ENCODE measurements at regions of chr5 and their contacts with region 1.

Region 1: DNA sequence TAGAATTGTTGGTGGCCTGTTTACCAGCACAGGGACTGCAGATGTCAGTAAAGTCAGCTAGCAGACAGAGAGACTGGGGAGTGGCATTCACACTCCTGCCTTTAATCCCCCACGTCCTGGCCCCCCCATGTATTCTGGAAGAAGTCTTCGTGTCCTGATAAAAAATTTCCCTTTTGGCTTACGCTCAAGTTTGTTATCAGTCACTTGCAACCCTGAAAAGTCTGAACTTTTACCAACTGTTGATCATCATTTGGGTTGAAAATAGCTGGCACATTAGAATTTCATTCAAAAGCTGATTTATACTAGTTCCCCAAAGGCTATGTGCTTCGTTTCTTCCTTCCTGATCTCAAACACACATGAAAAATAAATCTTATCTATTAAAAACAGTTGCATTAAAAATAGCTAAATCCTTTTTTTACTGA is 5.8 kb upstream of the CRHBP start:
- DNase-seq: no peak
- H3K4me3 Mint-ChIP-seq: no peak overlapping the region
- H3K27ac Mint-ChIP-seq: no peak overlapping the region
- H3K4me1 Mint-ChIP-seq: no peaks in the 10 kb centered on the region
- H3K27me3 Mint-ChIP-seq: peaks cover 36% of the 10 kb centered on the region
- CTCF ChIP-seq: no peak

Region 2: DNA sequence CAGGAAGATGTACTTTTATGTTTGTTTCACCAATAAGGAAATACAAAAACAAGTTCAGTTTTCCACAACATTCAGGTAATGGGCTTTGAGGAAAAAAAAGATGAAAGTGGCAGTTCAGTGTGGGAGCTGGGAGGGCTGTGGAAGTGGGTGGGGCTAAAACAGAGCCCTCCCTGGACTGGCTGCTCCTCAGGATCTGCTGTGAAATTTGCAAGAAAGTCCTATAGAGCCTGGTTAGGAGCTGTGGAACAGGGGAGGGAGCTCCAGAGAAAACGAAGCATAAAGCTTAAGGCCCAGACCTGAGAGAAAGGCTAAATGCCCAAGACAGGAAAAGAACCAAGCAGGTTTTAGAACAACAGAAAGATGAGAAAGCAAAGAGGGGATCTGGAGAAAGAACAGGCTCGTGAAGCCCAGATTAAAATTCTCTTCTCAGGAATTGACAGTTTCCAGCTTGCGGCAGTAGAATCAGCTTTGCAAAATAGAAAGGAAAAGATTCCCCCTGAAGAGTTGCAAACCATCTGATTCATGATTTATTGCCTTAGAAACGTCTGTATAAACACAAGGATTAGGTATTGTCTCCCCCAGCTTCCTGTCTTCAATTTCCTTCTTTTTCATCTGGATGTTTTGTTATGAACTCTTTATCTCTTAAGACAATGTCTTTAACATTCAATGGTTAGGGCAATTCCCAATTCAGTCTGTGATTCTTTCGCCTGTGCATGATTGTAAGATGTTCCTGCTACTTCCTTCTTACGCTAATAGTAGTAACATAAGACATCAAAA is 20.6 kb before region 1 on chr5:
- CTCF ChIA-PET with region 1: interaction called, 16 read pairs
- intact Hi-C with region 1: no loop called
- DNase-seq: no peak
- H3K4me3 Mint-ChIP-seq: no peak overlapping the region
- H3K27ac Mint-ChIP-seq: no peak overlapping the region
- H3K4me1 Mint-ChIP-seq: no peaks in the 10 kb centered on the region
- H3K27me3 Mint-ChIP-seq: peaks cover 82% of the 10 kb centered on the region
- CTCF ChIP-seq: no peak

Region 3: GRCh38 chr5:77129391-77129990 is 182.4 kb after region 1 on chr5:
- CTCF ChIA-PET with region 1: no interaction called
- intact Hi-C with region 1: no loop called
- DNase-seq: peak; percentile 57
- H3K4me3 Mint-ChIP-seq: no peak overlapping the region
- H3K27ac Mint-ChIP-seq: no peak overlapping the region
- H3K4me1 Mint-ChIP-seq: no peaks in the 10 kb centered on the region
- H3K27me3 Mint-ChIP-seq: no peaks in the 10 kb centered on the region
- CTCF ChIP-seq: peak; percentile 47

Measured in Calu3 (cell line).